Common myeloid progenitor, CD34-positive (primary cell): ENCODE measurements at regions of chr13 and their contacts with region 1.

Region 1: DNA sequence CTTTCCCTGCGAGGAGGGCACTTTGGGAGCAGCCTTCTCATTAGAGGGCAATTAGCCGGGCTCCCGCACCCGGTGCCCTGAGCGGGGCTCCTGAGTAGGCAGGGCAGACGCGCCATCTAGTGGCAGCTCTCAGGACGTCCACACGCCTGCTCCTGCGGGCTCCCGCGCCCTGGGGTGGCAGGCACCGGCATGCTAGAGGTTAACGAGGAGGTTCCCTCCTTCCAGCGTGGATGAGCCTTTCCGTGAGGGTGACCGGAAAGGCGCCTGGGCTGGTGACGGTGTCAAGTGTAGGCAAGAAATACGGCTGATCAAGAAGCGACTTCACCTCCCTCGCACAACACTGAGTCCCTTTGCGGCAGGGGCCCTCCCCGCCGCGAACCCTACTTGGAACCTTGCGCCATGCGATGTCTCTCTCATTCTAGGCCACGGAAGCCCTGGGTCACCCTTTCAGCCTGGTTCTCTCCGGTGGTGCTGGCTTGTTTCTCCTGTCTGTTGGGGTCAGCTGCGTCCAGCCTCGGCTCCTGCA is 67.7 kb downstream of the ALOX5AP start:
- DNase-seq: peak; percentile 73 to 81 (median 77)
- H3K4me3 ChIP-seq: peak overlapping the region in 4 of 7 experiments; percentile 32 to 68 (median 57)
- H3K27ac ChIP-seq: no peak overlapping the region
- H3K4me1 ChIP-seq: peaks cover 0 to 13% (median 9%) of the 10 kb centered on the region in 4 experiments
- H3K27me3 ChIP-seq: peaks cover 0 to 3% (median 0%) of the 10 kb centered on the region in 5 experiments

Region 2: DNA sequence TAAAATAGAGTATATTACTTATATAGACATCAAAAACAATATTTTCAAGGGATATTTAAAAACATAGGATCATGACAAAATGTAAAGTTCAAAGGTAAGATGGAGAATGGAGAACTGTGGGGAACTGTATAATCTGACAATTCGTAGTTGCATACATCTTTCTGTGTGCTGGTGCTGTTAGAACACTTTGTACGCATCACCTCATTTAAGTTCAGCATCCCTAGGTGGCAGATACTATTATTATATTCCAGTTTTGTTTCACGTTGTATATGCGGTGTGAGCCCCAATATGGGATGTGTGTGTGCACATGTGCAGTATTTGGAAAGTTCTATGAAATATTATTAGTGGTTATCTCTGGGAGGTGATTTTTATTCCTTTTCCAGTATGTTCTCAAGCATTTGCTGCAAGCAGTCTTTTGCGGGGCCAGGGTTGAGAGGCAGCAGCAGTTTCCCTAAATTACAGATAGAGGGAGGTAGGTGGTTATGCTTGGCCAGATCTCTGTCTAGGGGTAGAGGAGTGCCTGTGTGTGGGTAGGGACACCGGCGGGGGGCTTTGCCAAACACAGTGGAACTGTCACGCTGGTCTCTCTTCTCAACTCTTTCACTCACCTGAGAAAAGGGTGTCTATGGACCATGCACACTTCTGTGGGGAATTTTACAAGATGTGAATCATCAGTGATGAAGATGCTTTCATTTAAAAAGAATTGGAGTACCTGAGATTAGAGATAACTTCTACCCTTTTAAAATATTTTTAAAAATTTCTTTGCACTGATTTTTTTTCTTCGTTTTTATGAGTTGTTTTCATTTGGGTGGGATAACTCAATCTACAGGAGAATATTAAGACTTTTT is 123.3 kb before region 1 on chr13:
- CTCF ChIA-PET with region 1: interaction called, 33 read pairs
- POLR2A ChIA-PET with region 1: interaction called, 3 read pairs
- DNase-seq: peak; percentile 58 to 74 (median 73)
- H3K4me3 ChIP-seq: no peak overlapping the region
- H3K27ac ChIP-seq: no peak overlapping the region
- H3K4me1 ChIP-seq: no peaks in the 10 kb centered on the region
- H3K27me3 ChIP-seq: no peaks in the 10 kb centered on the region

Region 3: DNA sequence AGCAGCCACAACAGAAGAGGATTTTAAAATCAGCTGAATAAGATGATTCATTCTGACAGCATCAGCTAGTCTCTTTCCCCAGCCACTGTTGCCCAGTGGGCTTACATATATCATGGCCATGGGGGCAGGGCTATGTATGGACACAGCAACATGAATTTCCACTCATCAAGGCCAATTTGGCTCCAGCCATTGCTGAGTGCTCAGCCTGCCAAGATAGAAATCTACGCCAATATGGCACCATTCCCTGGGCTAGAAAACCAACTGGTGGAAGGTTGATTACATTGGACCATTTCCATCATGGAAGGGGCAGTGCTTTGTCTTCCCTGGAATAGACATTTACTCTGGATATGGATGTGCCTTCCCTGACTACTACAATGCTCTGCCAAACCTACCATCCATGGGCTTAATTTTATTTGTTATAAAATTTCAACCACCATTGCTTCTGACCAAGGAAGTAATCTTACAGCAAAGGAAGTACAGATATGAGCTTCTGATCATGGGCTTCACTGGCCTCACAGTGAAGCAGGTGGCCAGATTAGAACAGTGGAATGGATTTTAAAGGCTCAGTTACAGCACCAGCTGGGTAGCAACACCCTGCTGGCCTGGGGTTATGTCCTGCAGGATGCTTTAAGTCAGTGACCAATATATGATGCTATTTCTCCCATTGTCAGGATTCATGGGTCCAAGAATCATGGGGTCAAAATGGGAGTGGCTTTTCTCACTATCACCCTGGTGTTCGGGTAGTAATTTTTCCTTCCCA is 77.5 kb before region 1 on chr13:
- CTCF ChIA-PET with region 1: no interaction called
- POLR2A ChIA-PET with region 1: no interaction called
- DNase-seq: no peak
- H3K4me3 ChIP-seq: no peak overlapping the region
- H3K27ac ChIP-seq: no peak overlapping the region
- H3K4me1 ChIP-seq: peaks cover 7 to 20% (median 16%) of the 10 kb centered on the region in 4 experiments
- H3K27me3 ChIP-seq: no peaks in the 10 kb centered on the region

Region 4: DNA sequence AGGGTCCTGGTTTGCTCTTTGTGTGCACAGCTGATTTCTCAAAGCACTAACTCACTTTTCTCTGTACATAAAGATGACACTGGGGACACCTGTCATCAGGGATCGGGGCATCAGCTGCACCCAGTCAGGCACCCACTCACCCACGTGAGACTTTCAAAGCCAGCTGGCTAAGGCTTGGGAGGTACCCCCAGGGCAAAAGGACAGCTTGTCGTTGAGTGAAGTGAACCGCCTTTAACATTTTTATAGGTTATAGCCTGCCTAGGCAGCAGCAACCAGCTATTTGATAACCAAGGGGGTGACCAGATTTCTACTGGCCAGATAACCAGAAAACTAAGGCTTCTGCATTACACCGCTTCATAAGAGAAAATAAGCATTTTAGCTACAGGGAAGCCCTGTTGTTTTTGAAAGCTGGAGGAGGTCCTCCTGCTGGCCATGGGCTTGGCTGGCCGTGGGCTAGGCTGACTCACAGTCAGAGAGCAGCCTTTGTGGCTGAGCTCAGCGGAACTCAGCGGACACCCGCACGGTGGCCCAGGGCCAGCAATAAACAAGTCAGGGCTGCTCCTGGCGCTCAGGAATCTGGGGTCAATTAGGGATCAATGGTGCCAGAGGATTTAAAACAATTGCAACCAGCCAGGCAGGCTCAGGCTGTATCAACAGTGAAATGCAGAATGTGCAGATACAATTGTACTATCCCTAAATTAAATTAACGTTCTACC is 10.6 kb before region 1 on chr13:
- CTCF ChIA-PET with region 1: interaction called, 10 read pairs
- POLR2A ChIA-PET with region 1: no interaction called
- DNase-seq: peak in 2 of 3 donors; percentile 11 to 16
- H3K4me3 ChIP-seq: no peak overlapping the region
- H3K27ac ChIP-seq: no peak overlapping the region
- H3K4me1 ChIP-seq: peaks cover 0 to 2% (median 0%) of the 10 kb centered on the region in 4 experiments
- H3K27me3 ChIP-seq: peaks cover 0 to 6% (median 0%) of the 10 kb centered on the region in 5 experiments

Region 5: DNA sequence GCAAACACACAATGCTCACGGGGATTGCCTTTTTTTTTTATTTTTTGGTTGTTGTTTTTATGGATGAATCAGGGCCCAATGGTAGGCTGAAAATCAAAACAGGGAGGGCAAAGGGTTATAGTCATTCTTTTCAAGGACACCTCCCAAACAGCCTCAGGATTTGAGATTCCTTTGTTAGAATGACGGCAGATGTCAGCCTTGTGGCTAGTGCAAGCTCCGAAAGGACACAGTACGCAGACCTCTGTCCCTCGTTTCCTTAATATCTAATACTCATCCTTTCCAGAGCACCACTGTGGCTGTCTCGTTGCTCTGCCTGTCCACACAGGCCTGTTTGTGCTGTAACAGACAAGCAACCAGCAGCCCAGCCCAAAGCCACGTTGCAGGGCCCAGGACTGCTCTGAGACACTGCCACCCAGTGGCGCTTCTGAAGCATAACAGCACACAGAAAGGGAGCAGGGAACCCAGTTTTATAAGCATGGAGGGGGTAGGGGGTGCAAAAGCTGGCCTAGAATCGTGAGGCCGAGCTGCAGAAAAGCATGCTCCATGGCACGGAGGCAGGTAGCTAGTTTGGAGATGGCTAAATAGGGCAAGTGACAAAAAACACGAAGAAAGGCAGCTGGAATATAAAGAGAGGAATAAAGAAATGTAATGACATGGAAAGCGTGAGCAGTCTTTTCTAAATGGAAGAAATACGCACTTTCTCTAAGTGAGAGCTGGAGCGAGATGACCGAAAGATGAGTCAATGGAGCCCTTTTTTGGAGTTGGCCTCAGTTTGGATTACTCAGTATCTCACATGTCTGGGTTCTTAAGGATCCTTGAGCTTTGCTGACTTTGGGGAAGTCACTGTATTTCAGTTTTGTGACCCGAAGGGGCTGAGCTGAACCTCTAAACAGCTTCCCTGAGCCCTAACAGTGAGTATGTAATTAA is 62.4 kb after region 1 on chr13:
- CTCF ChIA-PET with region 1: interaction called, 14 read pairs
- POLR2A ChIA-PET with region 1: no interaction called
- DNase-seq: peak; percentile 63 to 76 (median 74)
- H3K4me3 ChIP-seq: no peak overlapping the region
- H3K27ac ChIP-seq: no peak overlapping the region
- H3K4me1 ChIP-seq: peaks cover 0 to 3% (median 0%) of the 10 kb centered on the region in 4 experiments
- H3K27me3 ChIP-seq: peaks cover 0 to 10% (median 4%) of the 10 kb centered on the region in 5 experiments

Region 6: DNA sequence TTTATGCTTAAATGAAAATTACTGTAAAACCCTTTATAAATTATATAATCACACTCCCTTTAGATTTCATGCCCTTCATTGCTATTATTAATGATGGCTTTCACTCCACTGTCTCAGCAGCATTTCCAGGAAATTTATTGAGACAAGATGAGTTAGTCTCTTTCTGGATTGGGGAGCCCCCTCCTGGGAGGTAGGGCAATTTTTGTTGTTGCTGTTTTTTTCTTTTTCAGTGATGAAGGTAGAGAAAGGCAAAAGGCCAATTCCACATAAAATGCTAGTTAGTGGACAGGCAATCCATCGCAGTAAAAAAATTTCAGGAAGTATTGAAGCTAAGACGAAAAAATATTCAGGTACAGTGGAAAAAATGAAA is 209.6 kb after region 1 on chr13:
- CTCF ChIA-PET with region 1: no interaction called
- POLR2A ChIA-PET with region 1: no interaction called
- DNase-seq: no peak
- H3K4me3 ChIP-seq: no peak overlapping the region
- H3K27ac ChIP-seq: no peak overlapping the region
- H3K4me1 ChIP-seq: no peaks in the 10 kb centered on the region
- H3K27me3 ChIP-seq: peaks cover 0 to 29% (median 26%) of the 10 kb centered on the region in 5 experiments